ENCODE measurements at regions of chr5 and their contacts with region 1.

Region 1: DNA sequence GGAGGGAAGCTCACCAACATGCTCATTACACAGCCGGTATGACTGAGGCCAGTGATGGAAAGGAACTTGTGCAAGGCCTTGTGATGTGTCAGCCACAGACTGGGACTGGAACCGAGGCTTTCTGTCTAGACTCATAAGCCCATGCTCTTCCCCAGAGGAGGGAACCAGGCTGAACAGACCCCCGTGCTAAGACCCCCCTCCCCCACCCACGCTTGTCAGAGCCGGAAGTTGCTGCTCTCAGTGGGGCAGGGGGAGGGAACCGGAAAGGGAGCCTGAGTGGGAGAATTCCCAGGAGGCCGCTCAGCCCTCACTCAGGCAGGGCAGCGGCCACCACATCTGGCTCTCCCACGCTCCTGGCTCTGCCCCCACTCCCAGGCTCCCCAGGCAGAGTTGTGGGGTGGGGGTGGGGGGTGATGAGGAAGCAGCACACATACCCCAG is 4.1 kb upstream of the PDGFRB start:
- DNase-seq: no peak
- H3K4me3 ChIP-seq: no peak overlapping the region
- CTCF ChIP-seq: no peak
- POLR2A ChIP-seq: no peak

Region 2: GRCh38 chr5:150112261-150113046 is 47.3 kb before region 1 on chr5:
- intact Hi-C with region 1: loop called (anchors 1 kb)
- DNase-seq: peak; percentile 58 to 95
- H3K4me3 ChIP-seq: no peak overlapping the region
- CTCF ChIP-seq: no peak
- POLR2A ChIP-seq: no peak

Region 3: DNA sequence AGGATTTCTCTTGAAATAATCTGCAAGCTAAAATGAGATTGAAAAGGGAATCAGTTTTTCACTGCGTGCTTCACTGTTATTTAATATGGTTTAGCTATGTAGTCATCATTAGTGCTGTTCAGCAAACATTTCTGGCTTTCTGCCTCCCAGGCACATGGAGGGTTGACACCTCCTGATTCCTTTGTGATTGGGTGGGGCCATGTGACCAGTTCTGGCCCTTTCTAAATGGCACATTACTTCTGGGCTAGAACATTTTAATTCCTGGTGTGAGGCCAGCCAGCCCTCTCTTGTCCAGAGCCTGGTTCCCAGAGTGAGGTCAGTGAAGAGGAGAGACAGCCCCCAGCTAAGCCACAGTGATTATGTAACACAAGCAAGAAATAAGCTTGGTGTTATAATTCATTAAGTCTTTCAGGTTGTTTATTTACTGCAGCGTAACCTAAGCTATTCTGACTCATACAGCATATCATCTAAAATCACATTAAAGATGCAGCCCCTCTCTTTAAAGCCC is 160.3 kb after region 1 on chr5:
- intact Hi-C with region 1: no loop called
- DNase-seq: peak; percentile 88 to 93
- H3K4me3 ChIP-seq: no peak overlapping the region
- CTCF ChIP-seq: no peak
- POLR2A ChIP-seq: no peak